ENCODE measurements at regions of chr19 and their contacts with region 1.

Region 1: DNA sequence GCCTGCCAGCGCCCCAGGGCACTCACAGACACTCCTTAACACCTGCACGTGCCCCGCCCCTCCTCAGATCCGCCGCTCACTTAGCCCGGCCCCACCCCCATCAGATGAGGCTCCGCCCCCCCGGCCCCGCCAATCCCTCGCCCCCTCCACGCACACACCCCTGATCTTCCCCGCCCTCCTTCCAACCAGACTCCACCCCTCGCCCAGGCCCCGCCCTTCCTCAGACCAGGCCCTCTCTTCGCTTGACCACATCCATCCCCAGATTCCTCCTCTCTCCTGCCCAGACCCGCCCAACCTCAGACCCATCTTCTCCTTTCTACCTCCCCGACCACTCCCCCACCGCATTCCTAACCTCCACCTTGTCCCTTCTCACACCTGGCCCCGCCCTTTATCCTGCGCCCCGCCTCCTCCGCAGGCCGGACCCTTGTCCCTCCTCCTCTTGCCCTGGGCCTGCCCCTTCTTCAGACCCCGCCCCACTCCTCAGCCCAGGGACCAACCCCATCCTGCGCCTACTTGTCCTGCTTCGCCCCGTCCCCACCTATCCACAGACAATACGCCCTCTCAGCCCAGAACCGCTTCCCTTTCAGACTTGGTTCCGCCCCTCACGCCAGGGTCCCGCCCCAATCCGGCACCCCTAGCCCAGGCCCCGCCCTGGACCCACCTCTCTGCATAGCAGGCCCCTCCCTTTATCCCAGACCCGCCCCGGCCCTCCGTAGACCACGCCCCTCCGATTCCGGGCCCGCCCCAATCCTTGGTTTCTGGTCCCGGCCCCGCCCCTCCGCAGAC is 452 bp upstream of the KLHL26 start:
- DNase-seq: peak; percentile 97
- H3K4me3 Mint-ChIP-seq: peak overlapping the region; percentile 80
- H3K27ac Mint-ChIP-seq: peak overlapping the region; percentile 61
- H3K4me1 Mint-ChIP-seq: peaks cover 22% of the 10 kb centered on the region
- H3K27me3 Mint-ChIP-seq: peaks cover 5% of the 10 kb centered on the region

Region 2: DNA sequence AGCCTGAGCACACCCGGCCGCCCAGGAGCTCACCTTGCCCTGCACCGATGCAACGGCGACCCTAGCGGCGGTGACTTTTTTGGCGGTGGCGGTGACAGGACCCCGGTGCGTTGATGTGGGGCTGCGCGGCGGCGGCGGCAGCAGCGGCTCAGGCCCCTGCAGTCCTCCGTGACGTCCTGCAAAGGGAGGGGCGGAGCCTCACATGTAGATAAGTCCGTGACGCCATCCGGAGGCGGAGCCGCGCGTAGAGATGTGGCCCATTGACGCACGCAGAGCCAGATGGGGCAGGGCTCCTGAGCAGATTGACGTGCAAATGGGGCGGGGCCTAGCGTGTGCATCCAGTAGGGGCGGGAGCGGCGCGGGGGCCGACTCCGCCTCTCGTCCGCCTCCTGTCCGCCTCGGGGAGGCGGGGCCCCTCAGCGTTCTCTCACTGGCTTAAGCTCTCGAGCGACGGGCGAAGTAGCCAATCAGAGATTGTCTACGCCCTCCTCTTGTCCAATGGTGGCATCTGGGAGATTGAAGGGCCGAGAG is 432.4 kb before region 1 on chr19 and contains the start of gene RAB3A:
- intact Hi-C with region 1: loop called (anchors 2 kb)
- DNase-seq: peak; percentile 99
- H3K4me3 Mint-ChIP-seq: peak within 1 kb of the TSS; percentile 95
- H3K27ac Mint-ChIP-seq: peak within 1 kb of the TSS; percentile 86
- H3K4me1 Mint-ChIP-seq: peaks cover 18% of the 10 kb centered on the region
- H3K27me3 Mint-ChIP-seq: peaks cover 4% of the 10 kb centered on the region
- total RNA-seq, gene RAB3A: 7.2 and 11.0 TPM in 2 replicates

Region 3: DNA sequence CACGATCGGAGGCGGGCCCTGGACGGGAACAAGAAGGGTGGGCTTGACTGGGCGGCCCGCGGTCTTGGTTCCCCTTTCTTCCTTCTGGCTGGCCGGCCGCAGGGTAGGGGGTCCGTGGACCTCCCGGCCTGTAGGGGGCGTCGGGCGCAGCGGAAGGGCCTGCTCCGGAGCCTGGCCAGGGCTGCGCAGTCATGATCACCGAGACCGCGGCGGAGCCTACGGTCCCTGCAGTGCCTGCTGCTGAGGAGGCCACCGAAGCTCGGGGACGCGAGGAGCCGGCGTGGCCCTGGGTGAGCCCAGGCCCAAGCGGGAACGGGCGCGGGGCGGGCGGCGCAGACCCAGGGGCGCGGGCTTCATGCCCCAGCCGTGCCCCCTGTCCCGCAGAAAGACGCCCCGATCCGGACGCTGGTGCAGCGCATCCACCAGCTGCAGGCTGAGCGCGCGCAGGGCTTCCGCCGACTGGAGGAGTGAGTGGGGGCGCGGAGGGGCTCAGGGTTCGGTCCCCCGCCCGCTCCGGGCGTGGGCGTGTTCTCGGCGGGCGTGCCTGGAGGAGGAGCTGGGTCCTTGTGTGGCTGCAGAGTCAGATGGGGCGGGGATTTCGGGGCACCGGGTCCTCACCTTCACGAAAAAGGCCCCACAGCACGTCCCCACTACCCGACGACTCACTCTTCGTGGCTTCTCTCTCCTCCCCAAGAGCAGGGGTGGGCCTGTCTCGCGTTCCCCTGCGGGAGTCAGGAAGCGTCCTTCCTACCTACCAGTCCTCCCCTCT is 47.6 kb before region 1 on chr19 and contains the start of gene REX1BD:
- intact Hi-C with region 1: loop called (anchors 1 kb)
- DNase-seq: peak; percentile 86
- H3K4me3 Mint-ChIP-seq: peak within 1 kb of the TSS; percentile 90
- H3K27ac Mint-ChIP-seq: peak within 1 kb of the TSS; percentile 91
- H3K4me1 Mint-ChIP-seq: peaks cover 43% of the 10 kb centered on the region
- H3K27me3 Mint-ChIP-seq: no peaks in the 10 kb centered on the region
- total RNA-seq, gene REX1BD: 134 and 135 TPM in 2 replicates

Region 4: DNA sequence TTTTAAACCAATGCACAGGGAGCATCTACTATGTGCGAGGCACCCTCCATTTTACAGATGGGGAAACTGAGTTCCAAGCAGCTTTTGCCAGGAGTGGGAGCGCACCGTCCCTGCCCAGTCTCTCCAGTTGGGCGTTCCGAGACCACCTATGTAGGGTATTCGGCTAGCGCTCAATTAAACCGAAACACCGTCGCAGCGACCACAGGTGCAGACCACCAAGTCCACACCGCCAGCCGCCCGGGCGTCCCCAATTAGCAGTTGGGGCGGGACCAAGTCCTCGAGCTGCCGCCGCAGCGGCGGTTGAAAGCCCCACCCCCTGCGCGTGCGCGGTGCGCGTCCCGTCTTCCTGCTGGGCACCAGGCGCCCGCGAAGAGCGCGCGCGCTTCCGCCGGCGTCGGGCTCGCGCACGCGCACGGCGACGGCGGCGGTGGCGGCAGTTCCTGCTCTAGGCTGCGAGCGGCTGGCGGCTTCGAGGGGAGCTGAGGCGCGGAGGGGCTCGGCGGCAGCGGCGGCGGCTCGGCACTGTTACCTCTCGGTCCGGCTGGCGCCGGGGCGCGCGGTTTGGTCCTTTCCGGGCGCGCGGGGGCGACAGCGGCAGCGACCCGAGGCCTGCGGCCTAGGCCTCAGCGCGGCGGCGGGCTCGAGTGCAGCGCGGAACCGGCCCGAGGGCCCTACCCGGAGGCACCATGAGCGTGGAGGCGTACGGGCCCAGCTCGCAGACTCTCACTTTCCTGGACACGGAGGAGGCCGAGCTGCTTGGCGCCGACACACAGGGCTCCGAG is 195.3 kb after region 1 on chr19 and contains the start of gene UPF1:
- intact Hi-C with region 1: loop called (anchors 1 kb)
- DNase-seq: peak; percentile 96
- H3K4me3 Mint-ChIP-seq: peak within 1 kb of the TSS; percentile 96
- H3K27ac Mint-ChIP-seq: peak within 1 kb of the TSS; percentile 95
- H3K4me1 Mint-ChIP-seq: peaks cover 35% of the 10 kb centered on the region
- H3K27me3 Mint-ChIP-seq: peaks cover 14% of the 10 kb centered on the region
- total RNA-seq, gene UPF1: 102 and 113 TPM in 2 replicates

Region 5: DNA sequence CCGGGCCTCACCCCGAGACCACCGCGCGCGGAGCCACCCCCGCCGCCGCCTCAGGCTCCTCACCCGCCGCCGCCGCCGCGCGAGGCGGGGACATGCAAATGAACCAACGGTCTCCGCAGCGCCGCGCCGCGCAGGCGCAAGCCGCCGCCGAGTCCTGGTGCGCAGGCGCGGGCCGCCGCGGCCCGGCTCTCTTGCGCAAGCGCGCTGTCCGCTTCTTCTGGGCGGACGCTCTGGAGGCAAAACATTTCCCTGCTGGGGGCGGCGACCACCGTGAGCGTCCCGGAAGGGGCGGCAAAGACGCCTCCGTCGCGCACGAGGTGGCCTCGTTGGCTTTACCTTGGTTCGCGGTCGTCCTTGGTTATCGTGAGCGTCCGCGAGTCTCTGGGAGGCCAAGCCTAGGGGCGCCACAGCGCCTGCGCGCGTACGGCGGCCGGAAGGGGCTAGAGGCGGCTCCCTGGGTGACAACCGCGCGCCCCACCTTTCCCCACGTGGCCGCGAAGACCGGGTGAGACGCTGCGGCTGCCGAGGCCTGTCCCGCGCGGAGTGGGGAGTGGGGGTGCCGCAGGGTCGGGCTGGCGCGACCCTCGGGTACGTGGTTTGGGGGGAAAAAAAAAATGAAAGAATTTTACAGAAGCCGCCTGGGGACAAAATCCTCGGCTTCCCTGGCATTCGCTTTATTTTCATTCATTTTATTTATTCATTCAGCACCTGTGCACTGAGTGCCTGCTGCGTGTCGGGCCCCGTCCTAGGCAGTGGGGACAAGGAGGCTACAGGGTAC is 397.2 kb after region 1 on chr19 and contains the starts of genes ARMC6 and SUGP2:
- intact Hi-C with region 1: loop called (anchors 1 kb)
- DNase-seq: peak; percentile 89
- H3K4me3 Mint-ChIP-seq: peak within 1 kb of the TSS; percentile 98
- H3K27ac Mint-ChIP-seq: peak within 1 kb of the TSS; percentile 98
- H3K4me1 Mint-ChIP-seq: peaks cover 25% of the 10 kb centered on the region
- H3K27me3 Mint-ChIP-seq: no peaks in the 10 kb centered on the region
- total RNA-seq, gene ARMC6: 54.9 and 56.5 TPM in 2 replicates
- total RNA-seq, gene SUGP2: 114 and 128 TPM in 2 replicates

Region 6: DNA sequence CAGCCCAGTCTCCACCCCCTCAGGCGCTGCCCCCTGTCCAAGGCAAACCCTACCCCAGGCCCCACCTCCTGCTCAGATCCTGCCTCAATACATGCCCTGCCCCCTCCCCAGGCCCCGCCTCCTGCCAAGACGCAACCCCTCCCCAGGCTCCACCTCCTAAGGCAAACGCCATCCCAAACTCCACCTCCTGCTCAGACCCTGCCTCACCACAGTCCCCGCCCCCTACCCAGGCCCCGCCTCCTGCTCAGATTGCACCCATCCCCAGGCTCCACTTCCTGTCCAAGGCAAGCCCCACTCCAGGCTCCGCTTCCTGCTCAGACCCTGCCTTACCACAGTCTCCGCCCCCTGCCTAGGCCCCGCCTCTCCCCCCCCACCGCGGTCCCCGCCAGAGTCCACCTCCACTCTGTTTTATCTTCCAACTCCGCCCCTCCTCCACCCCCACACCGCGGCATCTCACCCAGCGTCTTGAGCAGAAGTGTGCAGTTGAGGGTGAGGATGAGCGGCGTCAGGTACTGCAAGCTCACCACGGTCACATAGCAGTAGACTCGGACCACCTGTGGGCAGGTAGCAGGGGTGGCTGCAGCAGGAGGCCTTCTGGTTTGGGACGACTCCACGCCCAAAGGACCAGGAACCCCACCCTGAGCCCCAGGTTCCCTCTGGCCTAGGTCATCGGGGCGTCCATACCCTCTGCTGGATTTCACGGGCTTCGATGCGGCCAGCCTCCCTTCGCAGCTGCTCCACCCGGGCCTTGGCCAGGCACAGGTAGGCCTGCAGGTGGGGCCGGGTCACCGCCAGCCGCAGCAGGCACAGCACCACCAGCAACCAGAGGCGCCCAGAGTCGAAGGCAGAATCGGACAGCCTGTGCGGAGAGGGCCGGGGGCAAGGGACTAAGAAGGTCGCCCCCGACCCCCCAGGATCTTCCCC is 484.2 kb after region 1 on chr19:
- intact Hi-C with region 1: no loop called
- DNase-seq: no peak
- H3K4me3 Mint-ChIP-seq: no peak overlapping the region
- H3K27ac Mint-ChIP-seq: no peak overlapping the region
- H3K4me1 Mint-ChIP-seq: no peaks in the 10 kb centered on the region
- H3K27me3 Mint-ChIP-seq: no peaks in the 10 kb centered on the region

Region 7: GRCh38 chr19:19320362-19321142 is 684.2 kb after region 1 on chr19 and contains the starts of genes MAU2 and SUGP1:
- intact Hi-C with region 1: loop called (anchors 1 kb)
- DNase-seq: peak; percentile 89
- H3K4me3 Mint-ChIP-seq: peak within 1 kb of the TSS; percentile 94
- H3K27ac Mint-ChIP-seq: peak within 1 kb of the TSS; percentile 98
- H3K4me1 Mint-ChIP-seq: peaks cover 20% of the 10 kb centered on the region
- H3K27me3 Mint-ChIP-seq: no peaks in the 10 kb centered on the region
- total RNA-seq, gene MAU2: 71.4 and 73.4 TPM in 2 replicates
- total RNA-seq, gene SUGP1: 76.3 and 79.8 TPM in 2 replicates

Measured in activated T-helper 1 cell treated with anti-CD3 and anti-CD28 coated beads, Interleukin-12 subunit alpha, Interleukin-12 subunit beta, Interleukin-2, Interleukin-4 antibody, amounts not matched to agents 30 ng/mL and 10 ng/mL and 1 ng/mL, durations not matched to agents 14 hours and 24 hours and 36 hours (primary cell).